IMR-90 (cell line): ENCODE measurements at regions of chr7 and their contacts with region 1.

Region 1: DNA sequence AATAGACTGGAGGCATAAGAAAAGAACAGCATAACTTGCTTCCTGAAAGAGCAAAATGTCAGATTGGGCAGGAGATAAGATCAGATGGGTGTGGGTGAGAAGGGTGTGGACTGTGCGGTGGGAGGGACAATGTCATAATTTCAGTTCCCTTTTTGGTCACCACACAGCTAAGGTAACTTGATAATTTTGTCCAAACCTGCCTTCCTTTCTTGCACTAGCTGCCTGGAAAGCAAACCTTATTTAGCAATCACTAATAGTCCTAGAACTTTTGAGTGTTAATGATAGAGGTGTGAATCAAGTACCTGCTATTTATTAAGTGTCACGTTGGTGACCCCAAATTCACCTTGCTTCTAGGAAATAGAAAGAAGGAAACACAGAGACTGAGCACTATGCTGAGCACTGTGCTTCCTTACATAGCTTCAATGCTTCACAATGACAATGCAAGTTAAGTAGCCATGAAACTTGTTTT is 72.4 kb upstream of the SP4 start:
- DNase-seq: no peak
- ATAC-seq: no peak
- H3K4me3 ChIP-seq: no peak overlapping the region
- H3K27ac ChIP-seq: no peak overlapping the region
- H3K4me1 ChIP-seq: no peaks in the 10 kb centered on the region
- H3K27me3 ChIP-seq: no peaks in the 10 kb centered on the region
- CTCF ChIP-seq: no peak
- POLR2A ChIP-seq: no peak
- RAD21 ChIP-seq: no peak

Region 2: DNA sequence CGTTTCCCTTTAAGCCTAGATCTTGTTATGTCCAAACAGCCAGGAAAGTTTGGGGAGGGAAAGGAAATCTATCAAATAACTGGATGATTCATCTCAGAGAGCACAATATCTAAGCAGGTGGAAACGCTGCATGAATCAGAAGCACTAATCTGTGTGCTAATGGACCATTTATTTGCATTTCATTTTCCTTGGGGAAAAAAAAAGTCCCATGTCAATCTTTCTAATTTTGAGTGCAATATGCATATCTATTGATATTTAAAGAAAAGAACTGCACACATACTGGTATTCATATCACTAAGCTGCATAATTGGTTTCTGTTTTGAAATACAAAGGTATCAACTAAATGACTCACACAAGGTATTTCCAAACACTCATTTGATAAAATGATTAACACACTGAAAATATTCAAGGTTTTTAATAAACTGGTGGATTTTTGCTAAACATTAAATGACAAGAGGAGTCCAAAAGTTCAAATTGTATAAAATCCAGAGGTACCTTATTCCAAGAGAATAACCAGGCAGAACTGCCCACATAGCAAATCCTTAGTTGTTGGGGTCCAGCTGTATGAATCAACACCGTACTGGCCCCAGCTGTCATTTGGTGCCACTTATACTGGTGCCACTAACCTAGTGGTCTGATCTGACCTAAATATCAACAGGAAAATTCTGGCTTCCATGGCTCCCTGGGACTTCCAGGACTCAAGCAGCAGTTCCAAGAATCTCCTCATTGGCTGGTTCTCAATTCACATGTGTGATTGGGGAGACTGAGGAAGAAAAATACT is 49.8 kb before region 1 on chr7:
- CTCF ChIA-PET with region 1: no interaction called
- POLR2A ChIA-PET with region 1: no interaction called
- dilution Hi-C with region 1: no loop called
- in situ Hi-C with region 1: no loop called
- intact Hi-C with region 1: loop called (anchors 1 kb)
- DNase-seq: no peak
- ATAC-seq: no peak
- H3K4me3 ChIP-seq: no peak overlapping the region
- H3K27ac ChIP-seq: no peak overlapping the region
- H3K4me1 ChIP-seq: no peaks in the 10 kb centered on the region
- H3K27me3 ChIP-seq: no peaks in the 10 kb centered on the region
- CTCF ChIP-seq: no peak
- POLR2A ChIP-seq: no peak
- RAD21 ChIP-seq: no peak

Region 3: DNA sequence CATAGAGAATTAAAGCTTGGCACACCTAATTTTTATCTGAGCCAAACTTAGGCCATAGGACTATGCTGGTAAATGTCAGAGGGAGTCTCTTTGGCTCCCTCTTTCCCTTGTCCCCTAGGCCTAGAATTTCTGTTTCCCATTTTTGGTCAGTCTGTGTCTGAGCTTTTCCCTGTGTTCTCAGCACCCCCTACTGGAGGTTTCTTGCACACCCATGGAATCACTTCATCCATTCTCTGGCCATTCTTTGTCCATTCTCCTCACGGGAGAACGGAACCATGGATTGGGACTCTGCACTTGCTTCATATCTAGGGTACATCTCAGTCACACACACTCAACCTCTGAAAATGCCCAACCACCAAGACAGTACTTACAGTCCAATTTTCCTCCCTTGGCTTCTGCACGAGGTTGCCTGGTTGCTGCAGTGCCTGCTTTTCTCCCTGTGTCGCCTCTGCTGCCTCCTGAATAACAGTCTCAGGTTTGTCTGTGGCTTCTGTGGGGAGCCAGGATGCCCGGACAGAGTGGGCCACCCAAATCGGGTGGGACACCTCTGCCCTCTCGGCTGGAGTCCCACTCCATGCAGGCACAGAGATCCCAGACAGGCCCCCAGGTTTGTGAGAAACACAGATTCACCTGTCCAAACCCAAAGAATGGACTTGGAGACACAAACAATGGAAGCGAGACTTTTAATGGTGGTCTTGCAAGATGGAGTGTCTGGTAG is 152.3 kb after region 1 on chr7:
- CTCF ChIA-PET with region 1: no interaction called
- POLR2A ChIA-PET with region 1: no interaction called
- dilution Hi-C with region 1: no loop called
- in situ Hi-C with region 1: no loop called
- intact Hi-C with region 1: no loop called
- DNase-seq: peak; percentile 42
- ATAC-seq: peak; percentile 95
- H3K4me3 ChIP-seq: no peak overlapping the region
- H3K27ac ChIP-seq: no peak overlapping the region
- H3K4me1 ChIP-seq: no peaks in the 10 kb centered on the region
- H3K27me3 ChIP-seq: no peaks in the 10 kb centered on the region
- CTCF ChIP-seq: peak; percentile 80
- POLR2A ChIP-seq: no peak
- RAD21 ChIP-seq: peak; percentile 89